CD4-positive, alpha-beta memory T cell (primary cell): ENCODE measurements at regions of chr21 and their contacts with region 1.

Region 1: GRCh38 chr21:32940079-32941014 is 85.4 kb upstream of the OLIG2 start:
- DNase-seq: peak in 4 of 5 donors; percentile 46 to 55 (median 50)
- H3K4me3 ChIP-seq: no peak overlapping the region
- H3K4me3 Mint-ChIP-seq: peak overlapping the region in 1 of 8 donors; percentile 52
- H3K27ac ChIP-seq: no peak overlapping the region
- H3K27ac Mint-ChIP-seq: no peak overlapping the region
- H3K4me1 ChIP-seq: no peaks in the 10 kb centered on the region
- H3K4me1 Mint-ChIP-seq: peaks cover 0 to 6% (median 0%) of the 10 kb centered on the region in 4 donors
- H3K27me3 ChIP-seq: no peaks in the 10 kb centered on the region
- H3K27me3 Mint-ChIP-seq: peaks cover 2 to 8% of the 10 kb centered on the region in 2 donors

Region 2: GRCh38 chr21:32612075-32612998 is 328.0 kb before region 1 on chr21 and contains the start of gene CFAP298:
- CTCF ChIA-PET with region 1: no interaction called
- POLR2A ChIA-PET with region 1: no interaction called
- intact Hi-C with region 1: no loop called
- DNase-seq: peak; percentile 90 to 97 (median 92)
- H3K4me3 ChIP-seq: peak within 1 kb of the TSS; percentile 95 to 99
- H3K4me3 Mint-ChIP-seq: peak within 1 kb of the TSS; percentile 91 to 98 (median 96)
- H3K27ac ChIP-seq: peak within 1 kb of the TSS; percentile 86
- H3K27ac Mint-ChIP-seq: peak within 1 kb of the TSS; percentile 98 to 99 (median 99)
- H3K4me1 ChIP-seq: peaks cover 12% of the 10 kb centered on the region
- H3K4me1 Mint-ChIP-seq: peaks cover 8 to 32% (median 20%) of the 10 kb centered on the region in 4 donors
- H3K27me3 ChIP-seq: no peaks in the 10 kb centered on the region
- H3K27me3 Mint-ChIP-seq: peaks cover 1 to 2% of the 10 kb centered on the region in 2 donors
- total RNA-seq, gene CFAP298: 29.4 to 39.1 TPM

Region 3: GRCh38 chr21:32886339-32886738 is 54.0 kb before region 1 on chr21:
- CTCF ChIA-PET with region 1: interaction called, 42 read pairs
- POLR2A ChIA-PET with region 1: interaction called, 3 read pairs
- intact Hi-C with region 1: loop called (anchors 1 kb)
- DNase-seq: peak; percentile 38 to 59 (median 51)
- H3K4me3 ChIP-seq: peak overlapping the region; percentile 41 to 53
- H3K4me3 Mint-ChIP-seq: peak overlapping the region; percentile 83 to 92 (median 89)
- H3K27ac ChIP-seq: peak overlapping the region; percentile 53
- H3K27ac Mint-ChIP-seq: peak overlapping the region; percentile 65 to 95 (median 90)
- H3K4me1 ChIP-seq: peaks cover 11% of the 10 kb centered on the region
- H3K4me1 Mint-ChIP-seq: peaks cover 13 to 19% (median 15%) of the 10 kb centered on the region in 4 donors
- H3K27me3 ChIP-seq: no peaks in the 10 kb centered on the region
- H3K27me3 Mint-ChIP-seq: peaks cover 0 to 2% of the 10 kb centered on the region in 2 donors

Region 4: DNA sequence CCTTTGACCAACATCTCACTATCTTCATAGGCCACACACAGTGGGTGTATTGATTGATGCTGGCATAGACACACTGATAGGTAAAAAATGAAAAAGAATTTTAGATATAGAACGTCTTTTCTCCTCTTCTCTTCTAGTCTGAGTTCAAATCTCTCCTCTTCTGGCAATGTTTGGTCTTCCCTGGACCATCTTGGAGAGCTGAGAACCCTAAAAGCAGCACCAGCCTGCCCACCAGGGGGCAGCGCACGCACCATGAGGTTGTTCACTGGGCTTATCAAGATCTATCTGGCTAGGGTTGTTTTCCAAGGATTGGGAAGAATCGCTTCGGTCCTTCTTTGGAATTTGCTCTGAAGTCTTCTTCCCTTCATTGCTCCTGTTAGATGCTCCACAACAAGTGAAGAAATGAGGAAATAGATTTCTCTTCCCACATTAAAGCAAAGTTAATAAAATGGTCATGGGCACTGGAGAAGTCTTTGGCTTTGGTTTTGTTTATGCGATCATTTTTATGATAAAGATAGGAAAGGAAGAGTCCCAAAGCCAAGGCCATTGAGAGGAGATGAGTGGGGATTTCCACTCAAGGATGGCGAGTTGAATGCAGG is 18.6 kb before region 1 on chr21:
- CTCF ChIA-PET with region 1: interaction called, 64 read pairs
- POLR2A ChIA-PET with region 1: no interaction called
- intact Hi-C with region 1: no loop called
- DNase-seq: peak in 3 of 5 donors; percentile 18 to 35 (median 20)
- H3K4me3 ChIP-seq: no peak overlapping the region
- H3K4me3 Mint-ChIP-seq: no peak overlapping the region
- H3K27ac ChIP-seq: no peak overlapping the region
- H3K27ac Mint-ChIP-seq: peak overlapping the region in 1 of 7 donors; percentile 82
- H3K4me1 ChIP-seq: peaks cover 2% of the 10 kb centered on the region
- H3K4me1 Mint-ChIP-seq: peaks cover 5 to 17% (median 8%) of the 10 kb centered on the region in 4 donors
- H3K27me3 ChIP-seq: no peaks in the 10 kb centered on the region
- H3K27me3 Mint-ChIP-seq: no peaks in the 10 kb centered on the region

Region 5: GRCh38 chr21:33127154-33127893 is 187.0 kb after region 1 on chr21:
- CTCF ChIA-PET with region 1: interaction called, 29 read pairs
- POLR2A ChIA-PET with region 1: interaction called, 3 read pairs
- intact Hi-C with region 1: loop called (anchors 1 kb)
- DNase-seq: peak; percentile 31 to 48 (median 41)
- H3K4me3 ChIP-seq: peak overlapping the region in 1 of 2 donors; percentile 20
- H3K4me3 Mint-ChIP-seq: peak overlapping the region in 7 of 8 donors; percentile 73 to 82 (median 75)
- H3K27ac ChIP-seq: no peak overlapping the region
- H3K27ac Mint-ChIP-seq: no peak overlapping the region
- H3K4me1 ChIP-seq: peaks cover 7% of the 10 kb centered on the region
- H3K4me1 Mint-ChIP-seq: peaks cover 4 to 7% (median 6%) of the 10 kb centered on the region in 4 donors
- H3K27me3 ChIP-seq: no peaks in the 10 kb centered on the region
- H3K27me3 Mint-ChIP-seq: peaks cover 12 to 25% of the 10 kb centered on the region in 2 donors

Region 6: DNA sequence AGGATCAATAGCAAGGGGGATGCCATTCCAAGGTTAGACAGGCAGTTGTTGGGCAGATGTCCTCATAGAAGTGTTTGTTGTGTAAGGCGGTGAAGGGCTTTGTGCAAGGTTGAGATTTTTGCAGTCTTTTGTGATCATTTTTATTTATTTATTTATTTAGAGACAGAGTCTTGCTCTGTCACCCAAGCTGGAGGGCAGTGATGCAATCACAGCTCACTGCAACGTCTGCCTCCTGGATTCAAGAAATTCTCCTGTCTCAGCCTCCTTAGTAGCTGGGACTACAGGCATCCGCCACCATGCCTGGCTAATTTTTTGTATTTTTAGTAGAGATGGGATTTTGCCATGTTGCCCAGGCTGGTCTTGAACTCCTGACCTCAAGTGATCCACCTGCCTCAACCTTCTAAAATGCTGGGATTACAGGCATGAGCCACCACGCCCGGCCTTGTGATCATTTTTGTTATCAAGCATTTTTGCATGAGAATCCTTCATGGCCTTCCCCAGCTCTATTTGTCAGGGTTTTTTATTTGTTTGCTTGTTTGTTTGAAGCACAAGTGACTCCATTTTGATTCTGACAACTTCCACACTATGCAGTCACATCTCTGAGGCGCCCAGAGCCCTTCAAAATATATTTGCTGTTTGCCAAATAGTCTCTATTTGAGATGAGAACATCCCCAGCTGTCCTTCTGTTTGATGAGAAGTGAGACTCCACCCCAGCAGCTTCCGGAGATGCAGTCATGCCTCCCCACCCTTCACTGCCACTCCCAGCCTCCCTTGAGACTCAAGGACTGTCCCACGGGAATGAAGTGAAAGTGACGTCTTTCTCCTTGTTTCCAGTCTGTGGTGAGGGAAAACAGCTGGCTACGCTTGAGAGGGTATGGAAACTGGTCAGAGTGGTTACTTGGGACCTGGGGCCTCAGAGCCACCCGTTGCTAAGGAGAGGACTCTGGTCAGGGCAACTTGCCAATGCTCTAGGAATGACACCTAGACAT is 501.4 kb after region 1 on chr21:
- CTCF ChIA-PET with region 1: interaction called, 10 read pairs
- POLR2A ChIA-PET with region 1: no interaction called
- intact Hi-C with region 1: loop called (anchors 1 kb)
- DNase-seq: no peak
- H3K4me3 ChIP-seq: no peak overlapping the region
- H3K4me3 Mint-ChIP-seq: no peak overlapping the region
- H3K27ac ChIP-seq: no peak overlapping the region
- H3K27ac Mint-ChIP-seq: peak overlapping the region in 4 of 7 donors; percentile 14 to 53 (median 30)
- H3K4me1 ChIP-seq: no peaks in the 10 kb centered on the region
- H3K4me1 Mint-ChIP-seq: peaks cover 5 to 9% (median 7%) of the 10 kb centered on the region in 4 donors
- H3K27me3 ChIP-seq: no peaks in the 10 kb centered on the region
- H3K27me3 Mint-ChIP-seq: no peaks in the 10 kb centered on the region